Psoas muscle (tissue), 8 donors: ENCODE measurements at regions of chr16 and their contacts with region 1.

Region 1: DNA sequence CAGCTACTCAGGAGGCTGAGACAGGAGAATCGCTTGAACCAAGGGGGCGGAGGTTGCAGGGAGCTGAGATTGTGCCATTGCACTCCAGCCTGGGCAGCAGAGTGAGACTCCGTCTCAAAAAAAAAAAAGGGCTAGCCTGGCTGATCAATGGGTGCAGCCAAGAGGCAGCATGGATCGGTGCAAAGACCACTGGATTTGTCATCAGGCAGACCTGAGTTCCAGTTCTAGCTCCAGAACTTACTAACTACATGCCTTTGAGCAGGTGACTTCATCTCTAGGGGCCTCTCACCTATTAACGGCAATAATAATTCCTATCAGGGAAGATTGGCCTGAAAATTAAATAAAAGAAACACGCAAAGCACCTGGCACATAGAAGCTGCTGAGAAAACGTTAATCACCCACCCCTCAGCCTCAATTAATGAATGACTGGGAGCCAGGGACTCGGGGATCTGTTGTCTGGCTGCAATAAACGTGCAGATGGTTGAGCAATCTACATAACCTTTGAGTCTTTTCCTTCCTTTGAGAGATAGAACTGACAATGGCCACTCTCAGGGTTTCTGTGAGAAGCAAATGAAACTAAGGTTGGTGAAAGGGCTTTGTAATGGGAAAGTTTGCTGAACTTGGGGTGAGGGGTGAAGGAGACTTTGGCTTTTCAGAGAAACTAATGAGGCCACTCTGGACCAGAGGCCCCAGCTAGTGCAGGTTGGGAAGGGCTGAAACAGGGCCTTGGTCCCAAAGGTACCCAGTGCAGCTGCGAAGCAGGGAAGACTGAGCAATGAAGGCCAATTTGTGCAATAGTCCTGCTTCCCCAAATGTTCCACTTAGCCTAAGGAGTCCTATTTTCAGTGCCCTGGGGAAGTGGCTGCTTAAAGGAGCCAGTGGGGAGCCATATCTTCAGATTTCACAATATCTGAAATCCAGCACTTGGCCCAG is 7.6 kb downstream of the SEZ6L2 start:
- DNase-seq: peak in 1 of 2 donors; percentile 66
- ATAC-seq: peak in 1 of 4 donors; percentile 69
- H3K4me3 ChIP-seq: no peak overlapping the region
- H3K27ac ChIP-seq: no peak overlapping the region
- H3K4me1 ChIP-seq: no peaks in the 10 kb centered on the region
- H3K27me3 ChIP-seq: peaks cover 0 to 2% (median 0%) of the 10 kb centered on the region in 3 donors
- CTCF ChIP-seq: no peak

Region 2: DNA sequence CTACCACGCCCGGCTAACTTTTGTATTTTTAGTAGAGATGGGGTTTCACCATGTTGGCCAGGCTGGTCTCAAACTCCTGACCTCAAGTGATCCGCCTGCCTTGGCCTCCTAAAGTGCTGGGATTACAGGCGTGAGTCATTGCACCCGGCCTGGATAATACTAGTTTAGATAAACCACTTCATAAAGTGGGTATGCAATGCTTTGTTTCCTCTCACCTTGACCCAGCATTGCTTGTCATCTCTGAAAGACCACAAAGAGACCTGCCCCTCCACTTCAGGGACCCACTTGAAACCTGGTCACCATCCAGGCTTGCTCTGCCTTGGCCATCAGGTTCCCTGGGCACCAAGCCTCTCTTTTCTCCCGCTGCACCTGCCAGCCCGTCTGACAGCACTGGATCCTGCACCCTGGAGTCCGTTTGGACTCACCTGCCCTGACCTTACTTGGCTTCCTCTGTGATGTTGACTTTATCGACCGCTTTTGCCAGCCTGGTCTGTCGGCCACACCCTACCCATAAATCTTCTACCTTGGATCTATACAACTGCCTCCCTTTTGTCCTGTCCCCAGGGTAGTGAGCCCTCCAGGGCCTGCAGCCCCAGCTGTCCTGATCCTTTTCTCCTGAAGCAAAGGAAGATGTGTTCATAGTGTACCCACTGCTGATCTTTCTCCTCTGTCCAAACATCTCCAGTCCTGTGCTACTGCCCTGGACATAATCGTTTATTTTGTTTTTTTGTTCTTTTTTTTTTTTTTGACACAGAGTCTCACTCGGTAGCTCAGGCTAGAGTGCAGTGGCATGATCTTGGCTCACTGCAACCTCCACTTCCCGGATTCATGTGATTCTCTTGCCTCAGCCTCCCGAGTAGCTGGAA is 126.4 kb before region 1 on chr16:
- intact Hi-C with region 1: loop called in 1 of 2 experiments (anchors 5 kb)
- DNase-seq: no peak
- ATAC-seq: peak in 2 of 4 donors; percentile 35 to 60
- H3K4me3 ChIP-seq: no peak overlapping the region
- H3K27ac ChIP-seq: no peak overlapping the region
- H3K4me1 ChIP-seq: no peaks in the 10 kb centered on the region
- H3K27me3 ChIP-seq: no peaks in the 10 kb centered on the region
- CTCF ChIP-seq: no peak